Breast epithelium (tissue), 4 donors: ENCODE measurements at regions of chr2 and their contacts with region 1.

Region 1: DNA sequence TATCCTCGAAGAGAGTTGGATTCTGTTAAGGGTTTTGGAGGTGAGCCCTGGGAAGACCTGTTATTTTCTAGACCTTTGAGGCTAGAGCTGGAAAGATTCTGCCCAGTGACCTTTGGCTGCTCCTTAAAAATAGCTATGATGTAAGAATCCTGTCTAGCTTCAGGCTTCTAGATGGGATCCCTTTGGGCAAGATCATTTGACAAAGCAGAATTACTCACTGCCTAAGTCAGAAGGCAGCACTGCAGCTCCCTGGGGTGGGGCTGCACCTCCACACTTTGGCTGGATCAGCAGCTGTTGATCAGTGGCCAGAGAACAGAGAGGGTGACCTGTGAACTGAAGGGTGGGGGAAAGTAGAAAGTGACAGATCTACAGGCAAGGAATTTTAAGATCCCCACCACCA is 103.8 kb downstream of the ASAP2 start:
- DNase-seq: no peak
- H3K4me3 ChIP-seq: no peak overlapping the region
- H3K27ac ChIP-seq: peak overlapping the region; percentile 75 to 83
- H3K4me1 ChIP-seq: peaks cover 9 to 17% of the 10 kb centered on the region in 2 donors
- H3K27me3 ChIP-seq: no peaks in the 10 kb centered on the region
- CTCF ChIP-seq: no peak
- POLR2A ChIP-seq: no peak

Region 2: GRCh38 chr2:9205963-9206948 is 104.1 kb before region 1 on chr2 and contains the start of gene ASAP2:
- intact Hi-C with region 1: loop called (anchors 10 kb)
- DNase-seq: peak in 1 of 2 donors; percentile 69
- H3K4me3 ChIP-seq: peak within 1 kb of the TSS; percentile 78 to 90 (median 87)
- H3K27ac ChIP-seq: peak within 1 kb of the TSS; percentile 80 to 90
- H3K4me1 ChIP-seq: no peaks in the 10 kb centered on the region
- H3K27me3 ChIP-seq: no peaks in the 10 kb centered on the region
- CTCF ChIP-seq: peak in 2 of 3 donors; percentile 51 to 82
- POLR2A ChIP-seq: no peak
- total RNA-seq, gene ASAP2: 14.5 to 24.2 (median 21.0) TPM

Region 3: DNA sequence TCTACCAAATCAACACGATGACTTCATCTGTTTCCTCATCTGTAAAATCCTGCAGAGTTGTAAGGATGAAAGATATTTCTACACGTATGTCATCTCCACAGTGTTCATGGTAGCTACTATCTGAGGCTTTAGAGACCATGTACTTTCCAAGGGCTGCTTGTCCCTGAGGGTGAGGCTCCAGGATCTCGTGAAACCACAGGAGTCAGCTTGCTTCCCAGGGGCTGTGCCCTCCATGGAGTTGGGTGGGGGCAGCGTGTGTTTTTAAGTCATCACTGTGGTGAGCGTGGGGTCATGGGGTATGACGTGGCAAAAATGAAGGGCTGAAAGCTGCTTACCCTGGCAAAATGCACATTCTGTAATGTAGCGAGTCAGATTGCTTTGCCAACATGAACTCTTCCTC is 22.1 kb before region 1 on chr2:
- intact Hi-C with region 1: loop called (anchors 1 kb)
- DNase-seq: no peak
- H3K4me3 ChIP-seq: no peak overlapping the region
- H3K27ac ChIP-seq: no peak overlapping the region
- H3K4me1 ChIP-seq: no peaks in the 10 kb centered on the region
- H3K27me3 ChIP-seq: no peaks in the 10 kb centered on the region
- CTCF ChIP-seq: no peak
- POLR2A ChIP-seq: no peak

Region 4: GRCh38 chr2:9778012-9778411 is 467.6 kb after region 1 on chr2:
- intact Hi-C with region 1: no loop called
- DNase-seq: peak in 1 of 2 donors; percentile 57
- H3K4me3 ChIP-seq: no peak overlapping the region
- H3K27ac ChIP-seq: no peak overlapping the region
- H3K4me1 ChIP-seq: peaks cover 0 to 6% of the 10 kb centered on the region in 2 donors
- H3K27me3 ChIP-seq: no peaks in the 10 kb centered on the region
- CTCF ChIP-seq: peak in 1 of 3 donors; percentile 29
- POLR2A ChIP-seq: no peak